ENCODE measurements at regions of chr17 and their contacts with region 1.

Region 1: GRCh38 chr17:44775136-44775837 is 16.5 kb downstream of the ADAM11 start:
- DNase-seq: peak; percentile 95
- ATAC-seq: peak; percentile 95
- H3K4me3 ChIP-seq: peak overlapping the region; percentile 53
- H3K27ac ChIP-seq: no peak overlapping the region
- H3K4me1 ChIP-seq: peaks cover 3% of the 10 kb centered on the region; the same call in 1 of the 2 replicates
- H3K27me3 ChIP-seq: peaks cover 9% of the 10 kb centered on the region
- CTCF ChIP-seq: no peak
- POLR2A ChIP-seq: no peak
- RAD21 ChIP-seq: no peak

Region 2: DNA sequence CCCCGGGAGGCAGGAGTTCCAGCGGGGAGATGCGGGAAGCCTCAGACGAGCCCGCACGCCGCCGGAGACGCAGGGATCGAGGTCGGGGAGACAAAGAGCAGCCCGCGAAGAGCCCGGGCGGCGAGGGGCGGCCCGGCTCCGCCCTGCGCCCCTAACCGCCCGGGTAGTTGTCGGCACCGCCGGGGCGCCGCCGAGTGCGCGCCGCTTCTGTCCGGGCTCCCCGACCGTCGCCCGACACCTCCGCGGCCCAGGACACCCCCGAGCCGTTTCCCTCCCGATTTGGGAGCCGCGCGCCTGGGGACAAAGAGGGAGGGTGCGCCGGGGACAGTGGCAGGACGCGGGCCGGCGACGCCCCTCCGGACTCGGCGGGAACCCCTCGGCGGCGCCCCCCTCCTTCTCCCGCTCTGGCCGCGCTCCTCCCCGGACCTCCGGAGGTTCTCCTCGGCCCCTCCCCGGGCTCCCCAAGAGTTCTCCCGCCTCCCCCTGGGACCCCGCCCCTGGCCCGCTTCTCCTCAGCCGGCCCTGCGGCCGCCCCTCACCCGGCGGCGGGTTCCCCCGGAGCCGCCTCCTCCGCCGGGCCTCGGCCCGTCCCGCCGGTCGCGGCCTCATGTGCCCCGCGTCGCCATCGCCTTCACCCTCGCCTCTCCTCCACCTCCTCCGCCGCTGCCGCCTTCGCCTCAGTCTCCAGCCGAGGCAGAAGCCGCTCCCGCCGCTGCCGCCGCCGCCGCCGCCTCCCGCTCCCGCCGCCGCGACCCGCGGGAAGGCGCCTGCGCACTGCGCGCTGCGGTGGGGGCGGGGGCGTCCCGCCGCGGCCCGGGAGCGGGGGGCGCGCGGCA is 54.5 kb after region 1 on chr17 and contains the start of gene GJC1:
- CTCF ChIA-PET with region 1: interaction called, 3 read pairs
- POLR2A ChIA-PET with region 1: no interaction called
- dilution Hi-C with region 1: no loop called
- in situ Hi-C with region 1: no loop called
- intact Hi-C with region 1: loop called (anchors 1 kb)
- DNase-seq: no peak
- ATAC-seq: peak; percentile 77
- H3K4me3 ChIP-seq: peak within 1 kb of the TSS; percentile 77
- H3K27ac ChIP-seq: peak within 1 kb of the TSS; percentile 86
- H3K4me1 ChIP-seq: peaks cover 2% of the 10 kb centered on the region
- H3K27me3 ChIP-seq: no peaks in the 10 kb centered on the region
- CTCF ChIP-seq: no peak
- POLR2A ChIP-seq: no peak; the same call in 1 of the 2 replicates
- RAD21 ChIP-seq: no peak
- total RNA-seq, gene GJC1: 53.3 and 69.7 TPM in 2 replicates

Region 3: GRCh38 chr17:44864866-44865660 is 89.8 kb after region 1 on chr17:
- CTCF ChIA-PET with region 1: interaction called, 25 read pairs
- POLR2A ChIA-PET with region 1: no interaction called
- dilution Hi-C with region 1: no loop called
- in situ Hi-C with region 1: loop called (anchors 5 kb)
- intact Hi-C with region 1: loop called (anchors 1 kb)
- DNase-seq: peak; percentile 73
- ATAC-seq: peak; percentile 89
- H3K4me3 ChIP-seq: no peak overlapping the region
- H3K27ac ChIP-seq: no peak overlapping the region
- H3K4me1 ChIP-seq: no peaks in the 10 kb centered on the region
- H3K27me3 ChIP-seq: no peaks in the 10 kb centered on the region
- CTCF ChIP-seq: peak; percentile 89
- POLR2A ChIP-seq: no peak
- RAD21 ChIP-seq: peak; percentile 82

Region 4: DNA sequence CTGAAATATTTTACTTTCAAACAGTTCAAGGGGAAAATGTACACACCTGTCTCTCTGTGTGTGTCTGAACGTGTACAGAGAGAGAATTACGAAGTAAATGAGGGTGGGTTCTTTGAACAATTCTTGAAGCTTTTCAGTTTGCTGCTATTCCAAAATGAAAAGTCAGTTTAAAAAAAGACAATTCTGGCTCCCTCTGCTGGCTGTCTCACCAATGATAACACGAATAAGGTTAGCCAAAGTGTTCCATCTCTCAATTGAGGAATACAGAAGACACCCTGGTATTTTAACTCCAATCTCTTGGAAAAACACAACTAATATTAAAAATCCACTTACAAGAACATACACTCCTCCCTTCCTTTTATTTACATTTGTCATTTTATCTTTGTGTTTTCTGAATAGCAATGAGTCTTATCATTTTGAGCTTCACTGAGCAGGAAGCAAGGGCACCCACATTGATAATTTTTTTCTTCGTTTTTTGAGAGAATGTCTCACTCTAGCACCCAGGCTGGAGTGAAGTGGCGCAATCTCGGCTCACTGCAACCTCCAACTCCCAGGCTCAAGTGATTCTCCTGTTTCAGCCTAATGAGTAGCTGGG is 103.4 kb after region 1 on chr17:
- CTCF ChIA-PET with region 1: interaction called, 17 read pairs
- POLR2A ChIA-PET with region 1: no interaction called
- dilution Hi-C with region 1: no loop called
- in situ Hi-C with region 1: no loop called
- intact Hi-C with region 1: loop called (anchors 1 kb)
- DNase-seq: peak; percentile 38
- ATAC-seq: peak; percentile 48; the same call in 1 of the 2 replicates
- H3K4me3 ChIP-seq: no peak overlapping the region
- H3K27ac ChIP-seq: no peak overlapping the region
- H3K4me1 ChIP-seq: no peaks in the 10 kb centered on the region
- H3K27me3 ChIP-seq: no peaks in the 10 kb centered on the region
- CTCF ChIP-seq: peak; percentile 66
- POLR2A ChIP-seq: no peak
- RAD21 ChIP-seq: peak; percentile 51

Region 5: DNA sequence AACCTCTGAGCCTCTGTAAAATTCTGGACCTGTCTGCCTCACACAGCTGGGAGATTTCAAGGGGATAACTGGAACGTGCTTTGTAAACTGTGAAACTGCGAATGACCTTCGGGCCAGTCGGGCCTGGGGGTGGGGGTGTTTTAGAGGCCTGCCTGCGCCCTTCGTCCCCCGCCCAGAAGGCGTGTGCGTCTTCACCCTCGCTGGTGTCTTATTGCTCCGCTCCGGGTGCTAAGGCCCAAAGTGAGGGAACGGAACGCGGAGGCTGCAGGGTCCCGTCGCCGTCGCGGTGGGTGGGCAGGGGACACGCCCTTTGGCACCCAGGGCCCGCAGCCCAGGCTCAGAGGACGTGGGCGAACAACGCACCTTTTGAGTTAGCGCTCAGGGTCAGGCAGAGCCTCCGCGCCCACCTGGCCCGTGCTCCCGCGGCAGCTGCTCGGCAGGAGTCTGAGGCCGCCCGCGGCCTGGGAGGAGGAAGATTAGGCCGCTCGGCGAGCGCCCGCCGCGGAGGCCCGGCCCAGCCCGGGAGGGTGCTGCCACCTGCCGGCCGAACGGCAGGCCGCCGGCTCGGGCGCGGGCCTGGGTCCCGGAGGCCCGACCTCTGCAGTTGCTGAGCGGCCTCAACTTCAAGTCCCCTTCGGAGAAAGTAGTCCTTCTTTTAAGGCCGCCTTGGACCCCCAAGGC is 246.5 kb after region 1 on chr17:
- CTCF ChIA-PET with region 1: no interaction called
- POLR2A ChIA-PET with region 1: no interaction called
- dilution Hi-C with region 1: no loop called
- in situ Hi-C with region 1: no loop called
- intact Hi-C with region 1: loop called (anchors 2 kb)
- DNase-seq: peak; percentile 47
- ATAC-seq: peak; percentile 77
- H3K4me3 ChIP-seq: peak overlapping the region; percentile 29
- H3K27ac ChIP-seq: peak overlapping the region; percentile 72
- H3K4me1 ChIP-seq: peaks cover 26% of the 10 kb centered on the region
- H3K27me3 ChIP-seq: peaks cover 4% of the 10 kb centered on the region; the same call in 1 of the 2 replicates
- CTCF ChIP-seq: peak; percentile 95
- POLR2A ChIP-seq: no peak
- RAD21 ChIP-seq: peak; percentile 91

Region 6: DNA sequence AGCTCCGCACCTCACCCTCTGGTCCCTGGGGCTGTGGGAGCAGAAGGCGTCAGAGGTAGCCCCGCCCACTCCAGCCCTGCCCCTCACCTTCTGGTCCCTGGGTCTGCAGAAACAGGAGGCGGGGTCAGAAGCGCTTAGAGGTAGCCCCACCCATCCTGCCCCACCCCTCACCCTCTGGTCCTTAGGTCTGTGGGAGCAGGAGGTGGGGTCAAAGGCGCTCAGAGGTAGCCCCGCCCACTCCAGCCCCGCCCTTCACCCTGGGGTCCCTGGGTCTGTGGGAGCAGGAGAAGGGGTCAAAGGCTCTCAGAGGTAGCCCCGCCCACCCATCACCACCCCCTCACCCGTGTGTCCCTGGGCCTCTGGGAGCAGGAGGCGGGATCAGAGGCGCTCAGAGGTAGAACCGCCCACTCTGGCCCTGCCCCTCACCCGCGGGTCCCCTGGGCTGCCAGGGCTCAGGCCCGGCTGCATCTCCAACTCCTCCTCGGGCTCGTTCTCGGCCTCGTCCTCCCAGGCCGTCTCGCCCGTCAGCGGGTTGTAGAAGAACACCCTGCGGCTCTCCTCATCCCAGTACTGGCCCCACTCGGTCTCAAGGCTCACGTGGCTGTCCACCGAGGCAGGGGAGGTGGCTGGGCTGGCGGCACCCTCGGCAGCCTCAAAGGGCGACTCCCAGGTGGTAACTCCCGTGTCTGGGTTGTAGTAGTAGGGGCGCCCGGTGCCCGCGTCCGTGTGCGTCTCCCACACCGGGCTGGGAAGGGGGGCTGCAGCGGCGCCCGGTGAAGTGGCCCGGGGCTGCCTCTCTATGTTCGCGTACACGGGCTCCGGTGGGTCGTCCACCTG is 630.2 kb after region 1 on chr17:
- CTCF ChIA-PET with region 1: no interaction called
- POLR2A ChIA-PET with region 1: no interaction called
- dilution Hi-C with region 1: no loop called
- in situ Hi-C with region 1: no loop called
- intact Hi-C with region 1: no loop called
- DNase-seq: no peak
- ATAC-seq: peak; percentile 77
- H3K4me3 ChIP-seq: no peak overlapping the region
- H3K27ac ChIP-seq: no peak overlapping the region
- H3K4me1 ChIP-seq: peaks cover 6% of the 10 kb centered on the region; the same call in 1 of the 2 replicates
- H3K27me3 ChIP-seq: peaks cover 26% of the 10 kb centered on the region
- CTCF ChIP-seq: no peak
- POLR2A ChIP-seq: no peak
- RAD21 ChIP-seq: no peak